B cell (primary cell): ENCODE measurements at regions of chr6 and their contacts with region 1.

Region 1: DNA sequence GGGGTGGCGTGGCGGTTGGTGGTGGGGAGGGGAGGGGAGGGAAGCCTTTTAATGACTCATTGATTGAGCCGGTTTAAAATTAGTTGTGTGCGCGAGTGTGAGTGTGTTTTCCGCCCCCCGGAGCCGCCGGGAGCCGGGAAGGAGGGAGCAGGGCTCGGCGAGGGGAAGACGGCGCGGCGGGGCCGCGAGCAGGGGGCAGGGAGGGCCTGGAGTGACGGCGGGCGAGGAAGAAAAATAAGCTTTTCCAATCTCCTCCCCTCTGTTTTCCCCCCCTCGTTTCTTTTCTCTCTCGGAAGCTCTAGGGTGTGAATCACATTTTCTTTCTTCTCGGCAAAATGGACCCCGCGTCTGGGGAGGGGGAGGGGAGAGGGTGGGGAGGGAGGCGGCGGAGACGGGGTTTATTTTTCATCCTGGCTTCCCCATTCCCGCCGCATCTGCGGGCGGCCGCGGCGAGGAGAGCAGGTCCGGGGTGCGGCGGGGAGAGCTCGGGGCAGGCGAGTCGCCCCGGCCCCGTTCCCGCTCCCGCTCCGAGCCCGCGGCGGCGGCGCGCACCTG is 847 bp downstream of the BICRAL start:
- DNase-seq: peak; percentile 88
- ATAC-seq: peak; percentile 48
- H3K4me3 ChIP-seq: peak overlapping the region; percentile 55 to 99 (median 96)
- H3K4me3 Mint-ChIP-seq: peak overlapping the region; percentile 93
- H3K27ac ChIP-seq: peak overlapping the region; percentile 99 to 100
- H3K27ac Mint-ChIP-seq: peak overlapping the region; percentile 100
- H3K4me1 ChIP-seq: peaks cover 54 to 57% of the 10 kb centered on the region in 2 donors
- H3K4me1 Mint-ChIP-seq: peaks cover 41% of the 10 kb centered on the region
- H3K27me3 ChIP-seq: no peaks in the 10 kb centered on the region
- H3K27me3 Mint-ChIP-seq: no peaks in the 10 kb centered on the region
- CTCF ChIP-seq: no peak

Region 2: DNA sequence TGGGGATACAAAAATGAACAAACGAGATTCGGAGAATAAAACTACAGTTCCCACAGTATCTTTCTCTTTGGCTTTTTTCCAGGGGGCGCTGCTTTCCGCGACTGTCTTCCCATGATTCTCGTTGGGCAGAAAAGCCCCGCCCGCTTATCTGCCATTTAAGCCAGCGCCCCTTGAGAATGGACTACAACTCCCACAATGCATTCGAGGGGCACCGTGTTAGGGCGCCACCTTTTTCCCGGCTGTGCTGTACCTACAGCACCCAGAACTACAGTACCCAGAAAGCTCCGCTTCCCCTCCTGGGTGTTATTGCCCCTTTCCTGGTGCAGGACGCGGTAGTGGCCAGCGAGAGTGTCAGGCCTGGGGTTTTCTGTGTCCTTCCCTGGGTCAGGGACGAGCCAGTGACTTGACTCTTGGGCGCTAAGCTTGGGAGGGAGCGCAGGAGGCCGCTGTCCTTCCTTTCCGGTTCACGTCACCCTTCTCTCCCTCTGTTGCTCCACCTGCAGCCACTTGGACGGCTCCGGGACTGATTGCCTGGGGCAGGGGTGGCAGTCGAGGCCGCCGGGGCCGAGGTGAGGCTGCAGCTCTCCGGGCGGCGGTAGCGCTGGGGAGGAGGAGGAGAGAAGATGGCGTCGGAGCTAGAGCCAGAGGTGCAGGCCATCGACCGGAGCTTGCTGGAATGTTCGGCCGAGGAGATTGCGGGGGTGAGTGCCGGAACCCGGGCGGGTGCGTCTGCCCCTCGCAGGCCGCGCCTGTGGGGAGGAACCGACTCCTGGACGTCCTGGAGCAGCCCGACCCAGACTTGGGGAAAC is 218.8 kb before region 1 on chr6 and contains the start of gene UBR2:
- CTCF ChIA-PET with region 1: no interaction called
- POLR2A ChIA-PET with region 1: no interaction called
- intact Hi-C with region 1: loop called (anchors 10 kb)
- DNase-seq: peak; percentile 95
- ATAC-seq: peak; percentile 96
- H3K4me3 ChIP-seq: peak within 1 kb of the TSS; percentile 78 to 98 (median 91)
- H3K4me3 Mint-ChIP-seq: peak within 1 kb of the TSS; percentile 98
- H3K27ac ChIP-seq: peak within 1 kb of the TSS; percentile 90 to 91
- H3K27ac Mint-ChIP-seq: peak within 1 kb of the TSS; percentile 98
- H3K4me1 ChIP-seq: peaks cover 19 to 25% of the 10 kb centered on the region in 2 donors
- H3K4me1 Mint-ChIP-seq: peaks cover 36% of the 10 kb centered on the region
- H3K27me3 ChIP-seq: no peaks in the 10 kb centered on the region
- H3K27me3 Mint-ChIP-seq: no peaks in the 10 kb centered on the region
- CTCF ChIP-seq: peak; percentile 41
- total RNA-seq, gene UBR2: 56.2 and 61.5 TPM in 2 replicates

Region 3: DNA sequence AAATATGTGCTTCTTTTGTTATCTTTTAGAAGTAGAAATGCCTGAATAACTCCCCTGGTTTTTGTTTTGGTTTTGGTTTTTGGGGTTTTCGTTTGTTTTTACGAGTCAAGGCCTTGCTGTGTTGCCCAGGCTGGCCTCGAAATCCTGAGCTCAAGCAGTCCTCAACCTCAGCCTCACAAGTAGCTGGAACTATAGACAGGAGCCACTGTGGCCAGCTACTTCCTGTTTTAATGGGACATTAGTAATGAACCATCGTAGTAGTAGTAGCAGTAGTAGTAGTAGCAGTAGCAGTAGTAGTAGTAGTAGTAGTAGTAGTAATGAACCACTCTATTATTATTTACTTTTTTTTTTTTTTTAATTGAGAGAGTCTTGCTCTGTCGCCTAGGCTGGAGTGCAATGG is 152.9 kb before region 1 on chr6:
- CTCF ChIA-PET with region 1: no interaction called
- POLR2A ChIA-PET with region 1: no interaction called
- intact Hi-C with region 1: no loop called
- DNase-seq: no peak
- ATAC-seq: no peak
- H3K4me3 ChIP-seq: no peak overlapping the region
- H3K4me3 Mint-ChIP-seq: no peak overlapping the region
- H3K27ac ChIP-seq: peak overlapping the region; percentile 6 to 56
- H3K27ac Mint-ChIP-seq: no peak overlapping the region
- H3K4me1 ChIP-seq: no peaks in the 10 kb centered on the region
- H3K4me1 Mint-ChIP-seq: peaks cover 2% of the 10 kb centered on the region
- H3K27me3 ChIP-seq: no peaks in the 10 kb centered on the region
- H3K27me3 Mint-ChIP-seq: no peaks in the 10 kb centered on the region
- CTCF ChIP-seq: no peak

Region 4: GRCh38 chr6:42756722-42757121 is 26.0 kb before region 1 on chr6:
- CTCF ChIA-PET with region 1: no interaction called
- POLR2A ChIA-PET with region 1: interaction called, 15 read pairs
- intact Hi-C with region 1: no loop called
- DNase-seq: no peak
- ATAC-seq: no peak
- H3K4me3 ChIP-seq: no peak overlapping the region
- H3K4me3 Mint-ChIP-seq: no peak overlapping the region
- H3K27ac ChIP-seq: no peak overlapping the region
- H3K27ac Mint-ChIP-seq: no peak overlapping the region
- H3K4me1 ChIP-seq: peaks cover 0 to 8% of the 10 kb centered on the region in 2 donors
- H3K4me1 Mint-ChIP-seq: peaks cover 16% of the 10 kb centered on the region
- H3K27me3 ChIP-seq: no peaks in the 10 kb centered on the region
- H3K27me3 Mint-ChIP-seq: no peaks in the 10 kb centered on the region
- CTCF ChIP-seq: no peak

Region 5: GRCh38 chr6:42771741-42772100 is 11.0 kb before region 1 on chr6:
- CTCF ChIA-PET with region 1: interaction called, 16 read pairs
- POLR2A ChIA-PET with region 1: interaction called, 198 read pairs
- intact Hi-C with region 1: loop called (anchors 1 kb)
- DNase-seq: peak; percentile 68
- ATAC-seq: no peak
- H3K4me3 ChIP-seq: peak overlapping the region; percentile 30 to 77 (median 49)
- H3K4me3 Mint-ChIP-seq: peak overlapping the region; percentile 87
- H3K27ac ChIP-seq: peak overlapping the region; percentile 90 to 92
- H3K27ac Mint-ChIP-seq: peak overlapping the region; percentile 99
- H3K4me1 ChIP-seq: peaks cover 39 to 52% of the 10 kb centered on the region in 2 donors
- H3K4me1 Mint-ChIP-seq: peaks cover 52% of the 10 kb centered on the region
- H3K27me3 ChIP-seq: no peaks in the 10 kb centered on the region
- H3K27me3 Mint-ChIP-seq: no peaks in the 10 kb centered on the region
- CTCF ChIP-seq: no peak